ENCODE measurements at regions of chr13 and their contacts with region 1.

Region 1: GRCh38 chr13:32581177-32581786 is 5.0 kb upstream of the PDS5B start:
- DNase-seq: peak; percentile 42
- ATAC-seq: no peak
- H3K4me3 ChIP-seq: no peak overlapping the region
- H3K4me3 Mint-ChIP-seq: no peak overlapping the region
- H3K27ac ChIP-seq: no peak overlapping the region
- H3K27ac Mint-ChIP-seq: no peak overlapping the region
- H3K4me1 ChIP-seq: peaks cover 7 to 8% of the 10 kb centered on the region in 2 donors
- H3K4me1 Mint-ChIP-seq: peaks cover 8% of the 10 kb centered on the region
- H3K27me3 ChIP-seq: peaks cover 0 to 6% (median 0%) of the 10 kb centered on the region in 4 experiments
- H3K27me3 Mint-ChIP-seq: no peaks in the 10 kb centered on the region
- CTCF ChIP-seq: peak; percentile 74

Region 2: DNA sequence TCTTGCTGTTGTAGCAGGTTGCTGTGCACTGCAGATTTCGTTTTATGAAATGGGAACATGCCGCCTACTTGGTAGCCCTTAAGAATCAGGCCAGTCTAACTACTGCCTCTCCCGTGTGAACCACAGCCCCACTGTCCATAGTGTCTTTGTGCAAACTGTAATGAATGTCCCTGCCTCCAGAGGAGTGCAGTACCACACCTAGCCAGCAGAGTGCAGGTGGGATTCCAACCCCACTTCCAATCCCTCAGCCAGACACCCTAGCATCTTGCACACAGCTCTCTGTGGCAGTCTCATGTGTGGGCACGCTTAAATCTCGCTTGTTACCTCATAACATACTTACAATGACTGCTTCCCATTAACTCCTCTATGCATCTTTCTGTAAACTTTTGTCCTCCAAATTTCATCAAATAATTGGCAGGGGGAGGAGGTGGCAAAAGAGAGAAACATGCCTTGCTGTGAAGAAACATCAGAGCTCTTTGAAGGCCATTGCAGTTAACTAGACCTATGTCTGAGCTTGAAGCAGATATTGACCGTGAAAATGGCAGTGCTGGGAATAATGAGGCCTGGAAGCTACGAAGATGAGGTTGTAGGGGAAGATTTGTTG is 313.3 kb before region 1 on chr13:
- CTCF ChIA-PET with region 1: interaction called, 21 read pairs
- POLR2A ChIA-PET with region 1: no interaction called
- intact Hi-C with region 1: loop called (anchors 2 kb)
- DNase-seq: peak; percentile 55
- ATAC-seq: peak; percentile 81
- H3K4me3 ChIP-seq: no peak overlapping the region
- H3K4me3 Mint-ChIP-seq: no peak overlapping the region
- H3K27ac ChIP-seq: no peak overlapping the region
- H3K27ac Mint-ChIP-seq: no peak overlapping the region
- H3K4me1 ChIP-seq: no peaks in the 10 kb centered on the region
- H3K4me1 Mint-ChIP-seq: no peaks in the 10 kb centered on the region
- H3K27me3 ChIP-seq: no peaks in the 10 kb centered on the region
- H3K27me3 Mint-ChIP-seq: no peaks in the 10 kb centered on the region
- CTCF ChIP-seq: peak; percentile 82

Region 3: DNA sequence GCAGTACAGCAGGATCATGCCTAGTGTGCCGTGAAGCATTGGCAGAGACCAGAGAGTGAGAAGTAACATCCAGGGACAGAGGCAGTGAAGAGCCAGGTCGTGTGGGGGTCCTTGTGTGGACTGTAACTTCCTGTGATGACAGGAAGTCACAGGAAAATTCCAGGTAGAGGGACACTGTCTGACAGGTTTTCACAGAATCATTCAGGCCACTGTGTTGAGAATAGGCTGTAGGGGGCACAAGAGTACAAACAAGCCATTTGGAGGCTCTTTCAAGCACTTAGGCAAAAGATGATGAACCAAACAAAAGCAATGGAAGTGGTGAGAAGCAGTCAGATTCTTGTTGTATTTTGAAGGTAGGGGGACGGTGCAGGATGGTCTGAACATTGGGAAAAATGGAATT is 199.7 kb before region 1 on chr13:
- CTCF ChIA-PET with region 1: interaction called, 48 read pairs
- POLR2A ChIA-PET with region 1: no interaction called
- intact Hi-C with region 1: loop called (anchors 1 kb)
- DNase-seq: peak; percentile 37
- ATAC-seq: no peak
- H3K4me3 ChIP-seq: no peak overlapping the region
- H3K4me3 Mint-ChIP-seq: no peak overlapping the region
- H3K27ac ChIP-seq: no peak overlapping the region
- H3K27ac Mint-ChIP-seq: no peak overlapping the region
- H3K4me1 ChIP-seq: no peaks in the 10 kb centered on the region
- H3K4me1 Mint-ChIP-seq: no peaks in the 10 kb centered on the region
- H3K27me3 ChIP-seq: no peaks in the 10 kb centered on the region
- H3K27me3 Mint-ChIP-seq: no peaks in the 10 kb centered on the region
- CTCF ChIP-seq: peak; percentile 48

Region 4: GRCh38 chr13:32427852-32428580 is 153.3 kb before region 1 on chr13 and contains the start of gene N4BP2L1:
- CTCF ChIA-PET with region 1: interaction called, 11 read pairs
- POLR2A ChIA-PET with region 1: interaction called, 6 read pairs
- intact Hi-C with region 1: loop called (anchors 1 kb)
- DNase-seq: peak; percentile 93
- ATAC-seq: peak; percentile 74
- H3K4me3 ChIP-seq: peak within 1 kb of the TSS; percentile 73 to 93 (median 80)
- H3K4me3 Mint-ChIP-seq: peak within 1 kb of the TSS; percentile 88
- H3K27ac ChIP-seq: peak within 1 kb of the TSS; percentile 95 to 98
- H3K27ac Mint-ChIP-seq: peak within 1 kb of the TSS; percentile 96
- H3K4me1 ChIP-seq: peaks cover 28 to 47% of the 10 kb centered on the region in 2 donors
- H3K4me1 Mint-ChIP-seq: peaks cover 48% of the 10 kb centered on the region
- H3K27me3 ChIP-seq: no peaks in the 10 kb centered on the region
- H3K27me3 Mint-ChIP-seq: no peaks in the 10 kb centered on the region
- CTCF ChIP-seq: no peak
- total RNA-seq, gene N4BP2L1: 52.8 and 59.0 TPM in 2 replicates

Region 5: GRCh38 chr13:32472194-32472621 is 109.1 kb before region 1 on chr13:
- CTCF ChIA-PET with region 1: interaction called, 35 read pairs
- POLR2A ChIA-PET with region 1: no interaction called
- intact Hi-C with region 1: loop called (anchors 1 kb)
- DNase-seq: no peak
- ATAC-seq: no peak
- H3K4me3 ChIP-seq: no peak overlapping the region
- H3K4me3 Mint-ChIP-seq: no peak overlapping the region
- H3K27ac ChIP-seq: no peak overlapping the region
- H3K27ac Mint-ChIP-seq: no peak overlapping the region
- H3K4me1 ChIP-seq: no peaks in the 10 kb centered on the region
- H3K4me1 Mint-ChIP-seq: no peaks in the 10 kb centered on the region
- H3K27me3 ChIP-seq: no peaks in the 10 kb centered on the region
- H3K27me3 Mint-ChIP-seq: no peaks in the 10 kb centered on the region
- CTCF ChIP-seq: no peak

Region 6: DNA sequence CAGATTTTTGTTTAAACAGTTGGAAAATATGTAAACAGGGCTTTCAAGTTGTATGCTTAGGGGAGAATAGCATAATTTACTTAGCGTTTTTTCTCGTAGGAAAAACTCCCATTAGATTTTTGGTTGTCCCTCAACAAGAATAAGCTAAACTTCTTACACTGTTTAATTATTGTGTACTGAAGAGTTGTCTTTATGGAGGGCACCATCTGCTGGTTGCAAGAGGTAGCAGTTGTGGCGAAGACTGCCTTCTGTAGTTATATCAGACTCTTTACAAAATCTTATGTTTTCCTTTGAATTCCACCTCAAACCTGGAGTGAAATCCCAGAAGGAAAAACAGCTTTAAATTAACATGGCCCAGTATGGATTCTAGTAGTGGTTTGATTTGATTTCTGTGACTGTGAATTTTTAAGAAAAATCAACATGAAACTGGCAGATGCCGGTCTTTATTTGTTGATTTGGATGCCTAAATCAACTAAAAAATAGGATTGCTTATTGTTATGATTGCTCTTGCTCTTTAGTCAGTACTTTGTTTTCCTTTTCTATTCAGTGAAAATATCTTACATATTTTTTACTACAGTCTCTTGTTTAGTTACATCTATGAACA is 58.3 kb after region 1 on chr13:
- CTCF ChIA-PET with region 1: interaction called, 23 read pairs
- POLR2A ChIA-PET with region 1: interaction called, 4 read pairs
- intact Hi-C with region 1: loop called (anchors 1 kb)
- DNase-seq: peak; percentile 72
- ATAC-seq: peak; percentile 80
- H3K4me3 ChIP-seq: no peak overlapping the region
- H3K4me3 Mint-ChIP-seq: no peak overlapping the region
- H3K27ac ChIP-seq: no peak overlapping the region
- H3K27ac Mint-ChIP-seq: no peak overlapping the region
- H3K4me1 ChIP-seq: peaks cover 0 to 11% of the 10 kb centered on the region in 2 donors
- H3K4me1 Mint-ChIP-seq: peaks cover 33% of the 10 kb centered on the region
- H3K27me3 ChIP-seq: no peaks in the 10 kb centered on the region
- H3K27me3 Mint-ChIP-seq: no peaks in the 10 kb centered on the region
- CTCF ChIP-seq: peak; percentile 93

Region 7: GRCh38 chr13:32650705-32651311 is 69.5 kb after region 1 on chr13:
- CTCF ChIA-PET with region 1: interaction called, 81 read pairs
- POLR2A ChIA-PET with region 1: no interaction called
- intact Hi-C with region 1: loop called (anchors 1 kb)
- DNase-seq: peak; percentile 71
- ATAC-seq: peak; percentile 74
- H3K4me3 ChIP-seq: no peak overlapping the region
- H3K4me3 Mint-ChIP-seq: no peak overlapping the region
- H3K27ac ChIP-seq: no peak overlapping the region
- H3K27ac Mint-ChIP-seq: no peak overlapping the region
- H3K4me1 ChIP-seq: peaks cover 26 to 38% of the 10 kb centered on the region in 2 donors
- H3K4me1 Mint-ChIP-seq: peaks cover 53% of the 10 kb centered on the region
- H3K27me3 ChIP-seq: no peaks in the 10 kb centered on the region
- H3K27me3 Mint-ChIP-seq: no peaks in the 10 kb centered on the region
- CTCF ChIP-seq: peak; percentile 89

Region 8: GRCh38 chr13:32947411-32948276 is 366.4 kb after region 1 on chr13:
- CTCF ChIA-PET with region 1: no interaction called
- POLR2A ChIA-PET with region 1: no interaction called
- intact Hi-C with region 1: no loop called
- DNase-seq: no peak
- ATAC-seq: no peak
- H3K4me3 ChIP-seq: no peak overlapping the region
- H3K4me3 Mint-ChIP-seq: no peak overlapping the region
- H3K27ac ChIP-seq: no peak overlapping the region
- H3K27ac Mint-ChIP-seq: no peak overlapping the region
- H3K4me1 ChIP-seq: no peaks in the 10 kb centered on the region
- H3K4me1 Mint-ChIP-seq: no peaks in the 10 kb centered on the region
- H3K27me3 ChIP-seq: no peaks in the 10 kb centered on the region
- H3K27me3 Mint-ChIP-seq: peaks cover 10% of the 10 kb centered on the region
- CTCF ChIP-seq: no peak

Measured in B cell (primary cell).